ENCODE measurements at regions of chr4 and their contacts with region 1.

Region 1: GRCh38 chr4:169791527-169792156 is 33.9 kb upstream of the HPF1 start:
- DNase-seq: peak; percentile 65
- H3K4me3 ChIP-seq: peak overlapping the region; percentile 37 to 50 (median 42)
- H3K27ac ChIP-seq: no peak overlapping the region
- H3K4me1 ChIP-seq: peaks cover 9% of the 10 kb centered on the region
- H3K27me3 ChIP-seq: no peaks in the 10 kb centered on the region
- CTCF ChIP-seq: peak; percentile 49 to 59

Region 2: DNA sequence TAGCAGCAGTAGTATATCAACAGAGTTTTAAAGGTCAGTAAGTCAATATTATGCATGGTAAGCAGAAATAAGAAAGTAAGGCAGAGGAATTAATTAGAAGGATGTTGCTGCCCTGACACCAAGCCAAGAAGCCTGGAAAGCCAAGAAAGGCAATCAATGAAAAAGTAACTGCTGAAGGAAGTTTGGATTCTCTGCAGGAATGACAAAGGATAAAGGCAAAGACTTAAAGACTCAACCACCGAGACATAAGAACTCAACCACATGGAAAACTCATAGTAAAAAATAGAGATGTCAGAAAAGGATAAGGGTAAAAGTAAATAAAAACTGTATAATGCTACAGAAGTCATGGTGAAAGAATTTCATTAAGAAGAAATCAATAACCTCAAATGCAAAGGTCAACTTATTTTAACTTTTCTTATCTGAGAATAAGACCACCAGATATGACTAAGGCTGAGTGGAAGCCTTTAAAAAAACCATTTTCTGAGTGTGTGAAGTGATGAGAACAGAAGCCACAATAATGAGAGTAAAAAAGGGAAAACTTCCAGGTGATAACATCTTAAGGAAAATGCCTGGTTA is 234.5 kb before region 1 on chr4:
- CTCF ChIA-PET with region 1: no interaction called
- dilution Hi-C with region 1: no loop called
- in situ Hi-C with region 1: no loop called
- intact Hi-C with region 1: no loop called
- DNase-seq: no peak
- H3K4me3 ChIP-seq: no peak overlapping the region
- H3K27ac ChIP-seq: no peak overlapping the region
- H3K4me1 ChIP-seq: no peaks in the 10 kb centered on the region
- H3K27me3 ChIP-seq: no peaks in the 10 kb centered on the region
- CTCF ChIP-seq: no peak

Region 3: GRCh38 chr4:169619959-169620879 is 171.4 kb before region 1 on chr4 and contains the start of gene CLCN3:
- CTCF ChIA-PET with region 1: no interaction called
- dilution Hi-C with region 1: no loop called
- in situ Hi-C with region 1: no loop called
- intact Hi-C with region 1: loop called (anchors 1 kb)
- DNase-seq: peak; percentile 99
- H3K4me3 ChIP-seq: peak within 1 kb of the TSS; percentile 77 to 98 (median 83)
- H3K27ac ChIP-seq: peak within 1 kb of the TSS; percentile 99
- H3K4me1 ChIP-seq: peaks cover 13% of the 10 kb centered on the region
- H3K27me3 ChIP-seq: no peaks in the 10 kb centered on the region
- CTCF ChIP-seq: peak in 1 of 2 donors; percentile 16
- total RNA-seq, gene CLCN3: 29.4 to 30.2 TPM

Region 4: GRCh38 chr4:169757575-169758184 is 34.0 kb before region 1 on chr4 and contains the start of gene HPF1:
- CTCF ChIA-PET with region 1: no interaction called
- dilution Hi-C with region 1: no loop called
- in situ Hi-C with region 1: no loop called
- intact Hi-C with region 1: loop called (anchors 1 kb)
- DNase-seq: peak; percentile 89
- H3K4me3 ChIP-seq: peak within 1 kb of the TSS; percentile 84 to 95 (median 88)
- H3K27ac ChIP-seq: peak within 1 kb of the TSS; percentile 32
- H3K4me1 ChIP-seq: peaks cover 9% of the 10 kb centered on the region
- H3K27me3 ChIP-seq: no peaks in the 10 kb centered on the region
- CTCF ChIP-seq: no peak
- total RNA-seq, gene HPF1: 14.7 to 20.0 TPM

Region 5: GRCh38 chr4:170040031-170040680 is 248.5 kb after region 1 on chr4:
- CTCF ChIA-PET with region 1: no interaction called
- dilution Hi-C with region 1: no loop called
- in situ Hi-C with region 1: loop called in 1 of 2 experiments (anchors 5 kb)
- intact Hi-C with region 1: no loop called
- DNase-seq: no peak
- H3K4me3 ChIP-seq: no peak overlapping the region
- H3K27ac ChIP-seq: no peak overlapping the region
- H3K4me1 ChIP-seq: no peaks in the 10 kb centered on the region
- H3K27me3 ChIP-seq: no peaks in the 10 kb centered on the region
- CTCF ChIP-seq: no peak